Activated naive CD4-positive, alpha-beta T cell treated with anti-CD3 and anti-CD28 coated beads for 36 hours (primary cell): ENCODE measurements at regions of chr4 and their contacts with region 1.

Region 1: DNA sequence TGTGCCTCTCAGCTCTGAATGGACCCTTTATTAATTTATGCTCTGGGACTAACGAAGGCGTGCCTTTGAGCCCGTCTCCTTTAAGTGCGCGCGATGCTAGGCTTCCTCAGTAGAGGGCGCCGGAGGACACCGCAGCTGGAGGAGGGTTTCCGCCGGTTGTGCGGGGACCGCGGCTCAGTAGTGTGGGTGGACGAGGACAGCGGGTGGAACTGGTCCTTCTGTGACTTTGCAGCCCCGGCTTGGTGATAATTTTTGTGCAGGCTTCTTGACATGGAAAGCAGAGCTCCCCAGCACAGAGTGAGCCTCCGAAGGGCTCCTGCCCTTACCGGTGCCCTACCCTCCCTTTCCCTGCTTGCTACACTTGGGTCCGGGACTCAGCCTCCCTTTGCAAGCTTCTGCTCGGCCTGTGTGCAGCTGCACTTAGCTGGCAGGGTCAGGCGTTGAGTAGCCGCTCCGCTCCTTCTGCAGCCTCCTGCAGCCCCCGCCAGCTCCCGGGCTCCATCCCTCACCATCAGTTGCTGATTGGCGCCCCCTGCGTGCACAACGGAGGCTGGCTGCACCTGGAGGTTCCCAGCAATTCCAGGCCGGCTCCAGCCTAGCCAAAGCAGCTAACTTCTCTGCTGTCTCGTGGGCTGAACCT is 26.8 kb upstream of the BOD1L1 start:
- DNase-seq: peak; percentile 88
- H3K4me3 Mint-ChIP-seq: peak overlapping the region; percentile 76
- H3K27ac Mint-ChIP-seq: no peak overlapping the region
- H3K4me1 Mint-ChIP-seq: peaks cover 15% of the 10 kb centered on the region
- H3K27me3 Mint-ChIP-seq: peaks cover 1% of the 10 kb centered on the region

Region 2: DNA sequence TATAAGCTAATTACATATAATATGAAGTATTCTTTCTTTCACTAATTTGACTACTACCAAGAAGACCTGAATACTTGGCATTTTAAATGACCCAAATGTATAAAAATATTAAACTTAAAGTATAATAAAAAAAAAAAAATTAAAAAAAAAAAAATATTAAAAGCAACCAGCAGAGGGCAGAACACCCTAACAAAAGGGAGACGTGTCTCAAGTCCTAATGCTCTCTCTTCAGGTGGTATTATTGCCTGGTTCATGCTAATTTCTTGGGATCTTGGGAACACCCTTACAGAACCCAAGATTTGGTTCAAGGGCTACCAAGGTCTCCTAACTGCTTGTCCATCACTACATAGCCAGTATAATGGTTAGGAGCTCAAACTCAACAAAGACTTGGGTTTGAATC is 924.9 kb before region 1 on chr4:
- CTCF ChIA-PET with region 1: no interaction called
- intact Hi-C with region 1: loop called (anchors 1 kb)
- DNase-seq: no peak
- H3K4me3 Mint-ChIP-seq: no peak overlapping the region
- H3K27ac Mint-ChIP-seq: no peak overlapping the region
- H3K4me1 Mint-ChIP-seq: no peaks in the 10 kb centered on the region
- H3K27me3 Mint-ChIP-seq: peaks cover 23% of the 10 kb centered on the region

Region 3: GRCh38 chr4:13674971-13675370 is 20.7 kb after region 1 on chr4:
- CTCF ChIA-PET with region 1: interaction called, 10 read pairs
- intact Hi-C with region 1: no loop called
- DNase-seq: no peak
- H3K4me3 Mint-ChIP-seq: no peak overlapping the region
- H3K27ac Mint-ChIP-seq: no peak overlapping the region
- H3K4me1 Mint-ChIP-seq: no peaks in the 10 kb centered on the region
- H3K27me3 Mint-ChIP-seq: peaks cover 12% of the 10 kb centered on the region

Region 4: GRCh38 chr4:13980317-13981310 is 326.3 kb after region 1 on chr4:
- CTCF ChIA-PET with region 1: interaction called, 4 read pairs
- intact Hi-C with region 1: loop called (anchors 10 kb)
- DNase-seq: peak; percentile 7
- H3K4me3 Mint-ChIP-seq: no peak overlapping the region
- H3K27ac Mint-ChIP-seq: no peak overlapping the region
- H3K4me1 Mint-ChIP-seq: peaks cover 3% of the 10 kb centered on the region
- H3K27me3 Mint-ChIP-seq: peaks cover 16% of the 10 kb centered on the region

Region 5: GRCh38 chr4:14269824-14270223 is 615.5 kb after region 1 on chr4:
- CTCF ChIA-PET with region 1: no interaction called
- intact Hi-C with region 1: loop called (anchors 5 kb)
- DNase-seq: peak; percentile 10
- H3K4me3 Mint-ChIP-seq: no peak overlapping the region
- H3K27ac Mint-ChIP-seq: no peak overlapping the region
- H3K4me1 Mint-ChIP-seq: peaks cover 6% of the 10 kb centered on the region
- H3K27me3 Mint-ChIP-seq: peaks cover 8% of the 10 kb centered on the region

Region 6: DNA sequence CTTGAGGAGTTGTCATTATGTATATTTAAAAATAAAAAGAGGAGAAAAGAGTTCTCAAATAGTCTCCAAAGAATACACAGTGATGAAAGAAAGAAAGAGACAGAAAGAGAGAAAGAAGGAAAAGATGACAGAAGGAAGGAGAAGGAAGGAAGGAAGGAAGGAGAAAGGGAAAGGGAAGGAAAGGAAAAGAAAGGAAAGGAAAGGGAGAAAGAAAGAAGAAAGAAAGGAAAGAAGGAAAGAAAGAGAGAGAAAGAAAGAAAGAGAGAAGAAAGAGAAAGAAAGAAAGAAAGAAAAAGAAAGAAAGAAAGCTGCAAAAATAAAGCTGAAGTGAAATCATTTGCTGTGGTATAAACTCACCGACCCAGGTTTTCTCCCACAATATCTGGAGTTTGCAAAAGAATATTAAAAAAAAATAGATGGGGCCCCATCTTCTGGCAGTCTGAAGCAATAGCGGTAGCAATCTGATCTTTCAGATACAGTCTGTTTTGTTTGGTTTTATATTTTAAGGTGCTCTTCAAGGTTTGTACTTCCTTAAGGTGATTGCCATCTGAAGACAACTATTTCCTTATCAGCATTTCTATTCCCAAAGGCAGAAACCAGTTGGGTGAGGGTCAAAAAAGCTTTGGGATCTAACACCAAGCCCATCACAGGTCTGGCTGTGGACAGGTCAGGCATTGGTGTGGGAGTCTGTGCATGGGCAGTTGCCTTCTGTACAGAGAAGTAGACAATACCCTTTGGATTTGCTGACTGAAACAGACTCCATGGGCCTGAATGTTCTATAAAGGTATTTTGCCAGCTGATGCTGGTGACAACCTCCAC is 1508.4 kb after region 1 on chr4:
- CTCF ChIA-PET with region 1: no interaction called
- intact Hi-C with region 1: loop called (anchors 1 kb)
- DNase-seq: no peak
- H3K4me3 Mint-ChIP-seq: no peak overlapping the region
- H3K27ac Mint-ChIP-seq: no peak overlapping the region
- H3K4me1 Mint-ChIP-seq: no peaks in the 10 kb centered on the region
- H3K27me3 Mint-ChIP-seq: peaks cover 18% of the 10 kb centered on the region

Region 7: DNA sequence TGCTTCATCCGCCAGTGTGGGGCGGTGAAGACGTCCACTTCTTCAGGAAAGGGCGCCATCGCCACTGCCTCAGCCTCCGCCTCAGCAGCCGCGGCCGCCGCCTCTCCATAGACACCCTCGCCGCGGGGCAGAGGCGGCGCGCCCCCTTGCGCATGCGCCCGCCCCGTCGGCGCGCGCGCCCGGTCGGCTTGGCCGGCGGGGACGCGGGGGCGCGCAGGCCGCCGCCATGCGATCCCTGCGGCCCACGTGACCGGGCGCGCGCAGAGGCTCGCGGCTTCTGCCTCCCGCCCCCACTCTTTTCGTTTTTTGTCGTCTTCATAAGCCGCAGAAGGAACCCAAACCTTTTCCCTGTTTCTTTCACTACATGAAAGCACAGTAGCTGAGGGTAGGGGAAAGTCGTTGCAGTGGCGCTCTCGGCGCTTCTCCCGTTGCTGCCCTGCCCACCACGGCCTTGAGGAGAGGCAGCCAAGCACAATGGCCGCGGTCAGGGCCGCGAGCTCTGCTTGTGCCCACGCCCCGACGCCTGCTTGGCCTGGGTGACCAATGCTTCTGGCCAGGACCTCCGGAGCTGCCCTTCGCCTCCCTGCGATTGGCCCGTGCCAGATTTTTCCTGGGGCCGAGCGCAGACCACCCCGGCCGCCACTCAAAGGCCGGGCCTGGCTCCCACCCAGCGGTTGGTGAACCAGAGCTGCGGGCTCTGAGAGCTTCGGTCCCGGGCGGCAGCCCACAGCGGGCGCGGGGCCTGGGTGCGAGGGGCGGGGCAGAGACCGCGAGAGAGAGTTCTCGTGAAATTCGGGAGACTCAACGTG is 2001.2 kb after region 1 on chr4 and contains the start of gene FBXL5:
- CTCF ChIA-PET with region 1: no interaction called
- intact Hi-C with region 1: loop called (anchors 10 kb)
- DNase-seq: peak; percentile 79
- H3K4me3 Mint-ChIP-seq: peak within 1 kb of the TSS; percentile 99
- H3K27ac Mint-ChIP-seq: peak within 1 kb of the TSS; percentile 96
- H3K4me1 Mint-ChIP-seq: peaks cover 68% of the 10 kb centered on the region
- H3K27me3 Mint-ChIP-seq: no peaks in the 10 kb centered on the region
- total RNA-seq, gene FBXL5: 30.8 to 31.0 TPM